ENCODE measurements at regions of chr6 and their contacts with region 1.

Region 1: GRCh38 chr6:16183187-16183664 is 54.3 kb downstream of the MYLIP start:
- DNase-seq: no peak
- ATAC-seq: peak; percentile 48 to 85 (median 68)
- H3K4me3 ChIP-seq: peak overlapping the region; percentile 24
- H3K27ac ChIP-seq: no peak overlapping the region
- H3K4me1 ChIP-seq: peaks cover 12% of the 10 kb centered on the region
- H3K27me3 ChIP-seq: no peaks in the 10 kb centered on the region
- CTCF ChIP-seq: peak; percentile 76

Region 2: GRCh38 chr6:15948930-15949900 is 234.0 kb before region 1 on chr6:
- intact Hi-C with region 1: loop called in 1 of 2 experiments (anchors 10 kb)
- DNase-seq: no peak
- ATAC-seq: no peak
- H3K4me3 ChIP-seq: no peak overlapping the region
- H3K27ac ChIP-seq: no peak overlapping the region
- H3K4me1 ChIP-seq: peaks cover 3% of the 10 kb centered on the region
- H3K27me3 ChIP-seq: no peaks in the 10 kb centered on the region
- CTCF ChIP-seq: no peak

Region 3: GRCh38 chr6:16109659-16110305 is 73.4 kb before region 1 on chr6:
- intact Hi-C with region 1: no loop called
- DNase-seq: peak in 1 of 2 donors; percentile 79
- ATAC-seq: peak; percentile 71 to 91 (median 82)
- H3K4me3 ChIP-seq: no peak overlapping the region
- H3K27ac ChIP-seq: peak overlapping the region; percentile 82
- H3K4me1 ChIP-seq: peaks cover 52% of the 10 kb centered on the region
- H3K27me3 ChIP-seq: no peaks in the 10 kb centered on the region
- CTCF ChIP-seq: no peak

Region 4: DNA sequence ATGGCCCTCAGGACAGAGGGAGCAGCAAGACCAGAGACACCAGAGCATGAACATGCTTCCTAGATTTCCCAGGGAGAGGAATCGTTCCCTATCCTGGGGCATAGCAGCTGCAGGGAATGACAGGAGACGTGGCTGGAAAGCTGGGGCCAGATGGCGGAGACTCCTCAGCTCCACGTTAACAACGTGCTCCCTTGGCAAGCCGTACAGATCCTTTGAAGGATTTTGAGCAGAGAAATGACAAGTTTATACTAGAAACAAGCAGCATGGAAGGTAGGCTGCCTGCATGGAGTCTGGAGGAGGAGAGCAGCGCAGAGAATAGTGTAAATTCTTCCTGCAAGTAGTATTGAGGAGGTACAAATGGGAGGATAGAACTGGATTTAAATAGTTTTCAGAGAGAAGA is 42.6 kb before region 1 on chr6:
- intact Hi-C with region 1: loop called in 1 of 2 experiments (anchors 5 kb)
- DNase-seq: no peak
- ATAC-seq: no peak
- H3K4me3 ChIP-seq: no peak overlapping the region
- H3K27ac ChIP-seq: peak overlapping the region; percentile 97
- H3K4me1 ChIP-seq: peaks cover 80% of the 10 kb centered on the region
- H3K27me3 ChIP-seq: no peaks in the 10 kb centered on the region
- CTCF ChIP-seq: no peak